Posterior cingulate gyrus (tissue), 11 donors: ENCODE measurements at regions of chr4 and their contacts with region 1.

Region 1: DNA sequence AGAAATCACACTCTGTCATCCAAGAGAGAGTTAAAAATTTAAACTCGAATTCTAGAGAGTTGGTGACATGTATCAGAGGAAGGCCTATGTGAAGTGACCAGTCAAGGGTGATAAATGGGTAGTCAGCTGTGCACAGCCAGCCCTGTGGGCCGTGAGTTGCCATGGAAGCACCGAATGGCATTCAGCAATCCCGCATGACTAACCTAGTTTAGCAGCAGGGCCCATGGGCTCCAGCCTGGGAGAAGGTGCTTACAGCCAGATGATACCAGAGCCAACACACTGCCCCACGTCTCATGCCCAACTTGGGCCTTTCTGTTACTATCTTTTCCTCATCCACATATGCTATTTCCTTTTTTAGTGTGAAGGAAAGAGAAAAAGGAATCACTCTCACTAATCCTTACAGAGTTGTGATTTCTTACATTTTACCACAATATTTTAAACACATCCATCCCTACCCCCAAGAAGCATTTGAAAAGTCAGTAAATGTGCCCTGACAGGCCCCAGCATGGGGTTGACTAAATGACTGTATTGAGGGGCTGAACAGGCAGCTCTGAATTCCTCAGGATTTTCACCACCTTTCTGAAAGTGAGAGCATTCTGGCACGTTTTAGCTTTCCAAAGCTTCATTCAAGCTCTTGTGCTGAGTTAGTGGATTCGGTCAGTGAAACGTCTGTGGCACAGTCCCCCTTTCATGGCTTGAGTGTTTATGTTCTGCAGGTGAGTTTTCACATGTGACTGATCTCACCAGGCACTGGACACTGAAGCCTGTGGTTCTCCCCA is 104.2 kb downstream of the AFF1 start:
- DNase-seq: peak; percentile 54 to 95 (median 68)

Region 2: GRCh38 chr4:87053802-87054767 is 15.1 kb after region 1 on chr4:
- intact Hi-C with region 1: no loop called
- DNase-seq: no peak

Region 3: DNA sequence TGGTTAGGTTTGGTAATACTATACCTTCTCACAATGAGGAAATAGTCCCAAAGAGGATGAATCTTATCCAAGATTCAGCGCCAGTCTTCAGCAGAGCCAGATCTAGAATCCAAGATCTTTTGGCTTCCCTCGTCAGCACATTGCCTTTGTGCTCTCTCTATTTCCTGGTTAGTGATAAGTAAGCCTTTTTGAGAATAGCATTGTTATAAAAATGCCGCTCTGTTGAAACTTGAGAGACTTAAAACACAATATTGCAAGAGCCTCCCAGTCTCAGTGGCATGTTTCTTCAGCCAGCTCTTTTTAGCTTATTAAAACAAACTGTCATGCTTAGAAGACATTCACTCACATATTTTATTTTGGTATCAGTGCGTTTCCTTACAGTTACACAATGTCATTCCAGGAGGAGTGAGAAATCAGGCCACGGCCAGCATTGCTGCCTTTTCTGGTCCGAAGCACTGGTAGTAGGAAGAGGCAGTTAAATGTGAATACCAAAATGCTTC is 40.0 kb after region 1 on chr4:
- intact Hi-C with region 1: loop called (anchors 5 kb)
- DNase-seq: peak in 8 of 10 donors; percentile 19 to 90 (median 44)

Region 4: GRCh38 chr4:88230969-88231771 is 1192.1 kb after region 1 on chr4:
- intact Hi-C with region 1: no loop called
- DNase-seq: no peak